Psoas muscle (tissue), 8 donors: ENCODE measurements at regions of chr1 and their contacts with region 1.

Region 1: DNA sequence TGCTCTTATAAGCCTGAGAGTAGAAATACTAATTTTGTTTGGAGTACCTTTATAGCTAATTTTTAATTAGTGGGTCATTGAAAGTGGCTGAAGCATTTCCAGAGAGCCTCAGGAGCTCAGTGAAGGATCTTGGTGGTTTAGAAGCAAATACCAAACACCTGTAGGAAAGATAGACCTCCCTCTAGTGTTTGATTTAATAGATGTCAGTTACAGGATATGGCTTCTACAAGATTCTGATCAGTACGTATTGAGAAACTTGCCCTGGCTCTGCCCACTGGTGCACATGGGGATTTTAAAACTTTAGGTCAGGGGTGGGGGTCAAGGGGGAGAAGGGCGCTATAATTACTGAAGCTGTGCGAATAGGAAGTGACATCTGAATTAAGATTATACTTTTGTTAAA is 122.2 kb downstream of the POU2F1 start:
- DNase-seq: no peak
- ATAC-seq: peak in 2 of 4 donors; percentile 48 to 49
- H3K4me3 ChIP-seq: no peak overlapping the region
- H3K27ac ChIP-seq: no peak overlapping the region
- H3K4me1 ChIP-seq: peaks cover 14% of the 10 kb centered on the region
- H3K27me3 ChIP-seq: no peaks in the 10 kb centered on the region
- CTCF ChIP-seq: peak; percentile 17

Region 2: DNA sequence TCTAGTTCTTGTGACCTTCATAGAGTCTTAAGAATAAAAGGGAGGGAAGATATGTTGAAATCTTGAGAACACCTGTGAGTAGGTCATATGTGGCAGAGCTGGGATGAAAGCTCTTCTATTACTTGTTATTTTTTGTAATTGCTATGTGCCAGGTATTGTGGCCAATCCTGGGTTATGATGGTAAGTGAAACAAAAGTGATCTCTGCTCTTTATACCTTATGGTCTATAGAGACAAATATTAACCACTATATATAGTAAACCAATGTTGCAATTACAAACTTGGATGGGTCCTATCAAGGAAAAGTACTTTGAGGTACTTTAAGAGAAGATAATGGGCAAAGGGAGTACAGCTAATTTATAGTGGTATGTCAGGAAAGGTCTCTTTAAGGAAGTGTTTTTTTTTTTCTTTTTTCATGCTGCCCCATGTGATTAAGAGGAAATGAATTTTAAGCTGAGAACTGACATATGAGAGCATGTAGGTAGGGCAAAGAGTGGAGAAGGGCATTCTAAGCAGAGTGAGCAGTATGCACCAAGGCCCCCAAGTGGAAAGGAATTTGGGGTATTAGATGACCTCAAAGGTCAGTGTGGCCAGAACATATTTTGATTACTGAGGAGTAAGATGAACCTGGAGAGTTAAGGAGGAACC is 78.9 kb before region 1 on chr1:
- intact Hi-C with region 1: loop called in 1 of 2 experiments (anchors 10 kb)
- DNase-seq: no peak
- ATAC-seq: no peak
- H3K4me3 ChIP-seq: no peak overlapping the region
- H3K27ac ChIP-seq: no peak overlapping the region
- H3K4me1 ChIP-seq: peaks cover 46% of the 10 kb centered on the region
- H3K27me3 ChIP-seq: no peaks in the 10 kb centered on the region
- CTCF ChIP-seq: no peak